ENCODE measurements at regions of chr6 and their contacts with region 1.

Region 1: GRCh38 chr6:7276199-7276524 is 36.8 kb downstream of the SSR1 start:
- DNase-seq: no peak
- CTCF ChIP-seq: no peak

Region 2: DNA sequence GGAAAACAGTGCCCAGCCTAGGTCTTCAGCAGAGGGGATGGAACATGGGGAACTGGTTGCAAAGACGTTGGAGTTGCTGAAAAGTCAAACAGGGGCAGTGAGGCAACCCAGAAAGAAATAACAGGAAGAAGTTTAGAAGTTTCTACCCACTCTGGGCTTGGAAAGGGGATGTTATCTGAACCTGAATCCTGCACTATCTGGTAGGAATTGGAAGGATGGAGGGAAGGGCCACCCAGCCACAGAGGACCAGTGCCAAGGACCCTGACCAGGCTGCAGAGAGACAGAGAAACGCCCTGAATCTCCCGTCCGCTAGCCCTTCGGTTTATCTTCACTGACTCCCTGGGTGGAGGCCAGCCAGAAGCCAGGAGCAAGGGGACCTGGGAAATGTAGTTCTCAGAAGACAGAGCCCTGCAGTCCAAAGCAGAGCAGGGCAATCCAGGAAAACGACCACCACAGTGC is 385.7 kb before region 1 on chr6:
- CTCF ChIA-PET with region 1: no interaction called
- POLR2A ChIA-PET with region 1: no interaction called
- DNase-seq: no peak
- CTCF ChIP-seq: no peak

Region 3: DNA sequence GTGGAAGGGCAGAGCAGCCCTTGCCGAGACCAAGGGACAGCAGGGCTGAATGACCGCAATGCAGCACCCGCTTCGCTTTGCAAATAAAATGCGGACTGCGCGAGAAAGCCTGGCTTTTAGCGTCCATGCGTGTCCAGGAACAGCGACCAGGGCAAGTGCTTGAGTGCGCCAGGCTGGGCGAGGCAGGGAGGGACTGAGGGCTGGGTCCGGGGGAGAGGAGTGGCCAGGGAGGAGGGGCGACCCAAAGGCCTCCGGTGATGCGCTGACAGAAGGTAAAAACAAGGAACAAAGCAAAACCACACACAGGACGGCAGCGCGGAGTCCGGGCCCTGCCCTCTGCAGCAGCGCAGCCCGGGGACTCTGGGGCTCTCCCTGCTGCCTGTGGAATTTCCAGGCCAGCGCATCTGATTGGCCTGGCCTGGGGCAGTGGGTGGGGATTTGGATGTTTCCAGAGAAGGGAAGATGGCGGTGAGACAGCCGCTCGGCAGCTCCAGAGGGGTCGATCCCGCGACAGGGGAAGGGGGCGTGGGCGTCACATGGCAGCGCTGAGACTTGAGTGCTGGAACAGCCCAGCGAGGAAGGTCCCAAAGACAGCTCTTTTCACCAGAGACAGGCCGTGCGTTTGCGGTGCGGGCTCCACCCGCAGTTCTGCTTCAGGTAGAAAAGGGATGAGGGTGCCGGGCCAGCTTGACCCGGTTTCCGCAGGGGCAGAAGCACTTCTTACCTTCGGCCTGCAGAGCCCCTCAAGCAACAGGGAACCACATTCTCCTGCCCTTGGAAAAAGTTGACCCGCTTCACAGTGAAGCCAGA is 14.9 kb before region 1 on chr6:
- CTCF ChIA-PET with region 1: interaction called, 32 read pairs
- POLR2A ChIA-PET with region 1: no interaction called
- DNase-seq: peak; percentile 84
- CTCF ChIP-seq: no peak

Region 4: GRCh38 chr6:7292596-7293255 is 16.6 kb after region 1 on chr6:
- CTCF ChIA-PET with region 1: interaction called, 73 read pairs
- POLR2A ChIA-PET with region 1: no interaction called
- DNase-seq: no peak
- CTCF ChIP-seq: no peak

Region 5: DNA sequence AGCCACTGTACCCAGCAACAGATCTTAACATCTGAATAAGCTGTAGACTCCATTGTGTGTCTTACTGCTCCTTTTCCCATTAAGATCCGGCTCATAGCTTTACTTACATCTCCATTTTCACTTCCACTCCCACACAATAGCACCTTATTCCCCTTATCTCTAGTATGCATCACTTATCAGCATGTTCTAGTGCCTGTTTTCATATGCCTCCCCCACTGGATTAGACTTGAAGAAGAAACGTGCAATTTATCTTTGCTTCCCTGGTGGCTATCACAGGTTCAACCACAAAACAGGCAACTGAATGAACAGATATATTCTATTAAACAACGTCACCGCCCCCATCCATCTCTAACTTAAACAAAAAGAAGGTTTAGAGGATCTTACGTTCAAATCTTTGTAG is 24.8 kb after region 1 on chr6:
- CTCF ChIA-PET with region 1: interaction called, 17 read pairs
- POLR2A ChIA-PET with region 1: interaction called, 3 read pairs
- DNase-seq: no peak
- CTCF ChIP-seq: no peak

Region 6: DNA sequence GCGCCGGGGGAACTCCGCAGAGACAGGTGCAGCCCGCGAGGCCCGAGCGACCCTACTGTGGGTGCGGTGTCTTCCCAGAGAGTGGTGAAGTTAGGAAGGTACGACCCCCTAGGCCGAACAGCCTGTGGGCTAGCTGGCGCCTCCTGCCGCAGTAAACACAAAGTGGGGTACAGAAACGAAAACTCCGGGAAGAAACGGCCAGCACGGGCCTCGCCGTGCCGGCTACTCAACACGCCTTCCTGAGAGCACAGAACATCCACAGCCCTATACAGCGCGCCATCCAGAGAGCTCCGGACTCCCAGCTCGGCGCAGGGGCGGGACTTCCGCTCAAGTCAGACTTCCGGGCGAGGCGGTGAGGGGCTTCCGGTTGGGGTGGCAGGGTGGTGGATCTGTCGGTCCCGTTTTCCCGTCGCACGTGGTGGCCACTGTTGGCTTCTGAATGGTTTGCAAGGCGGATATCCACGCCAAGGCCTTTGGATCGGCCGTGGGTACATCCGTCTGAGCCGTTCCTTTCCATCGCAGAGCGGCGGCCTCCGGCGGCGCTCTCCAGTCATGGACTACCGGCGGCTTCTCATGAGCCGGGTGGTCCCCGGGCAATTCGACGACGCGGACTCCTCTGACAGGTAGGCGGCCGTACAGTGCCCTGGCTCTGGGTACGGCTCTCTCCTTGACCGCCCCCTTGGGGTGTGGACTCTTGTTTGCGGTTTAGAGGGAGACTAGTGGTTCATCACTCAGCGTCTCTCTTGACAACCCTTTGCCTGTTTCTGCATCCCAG is 113.5 kb after region 1 on chr6 and contains the starts of genes CAGE1 and RIOK1:
- CTCF ChIA-PET with region 1: interaction called, 25 read pairs
- POLR2A ChIA-PET with region 1: no interaction called
- DNase-seq: peak; percentile 95
- CTCF ChIP-seq: no peak

Region 7: DNA sequence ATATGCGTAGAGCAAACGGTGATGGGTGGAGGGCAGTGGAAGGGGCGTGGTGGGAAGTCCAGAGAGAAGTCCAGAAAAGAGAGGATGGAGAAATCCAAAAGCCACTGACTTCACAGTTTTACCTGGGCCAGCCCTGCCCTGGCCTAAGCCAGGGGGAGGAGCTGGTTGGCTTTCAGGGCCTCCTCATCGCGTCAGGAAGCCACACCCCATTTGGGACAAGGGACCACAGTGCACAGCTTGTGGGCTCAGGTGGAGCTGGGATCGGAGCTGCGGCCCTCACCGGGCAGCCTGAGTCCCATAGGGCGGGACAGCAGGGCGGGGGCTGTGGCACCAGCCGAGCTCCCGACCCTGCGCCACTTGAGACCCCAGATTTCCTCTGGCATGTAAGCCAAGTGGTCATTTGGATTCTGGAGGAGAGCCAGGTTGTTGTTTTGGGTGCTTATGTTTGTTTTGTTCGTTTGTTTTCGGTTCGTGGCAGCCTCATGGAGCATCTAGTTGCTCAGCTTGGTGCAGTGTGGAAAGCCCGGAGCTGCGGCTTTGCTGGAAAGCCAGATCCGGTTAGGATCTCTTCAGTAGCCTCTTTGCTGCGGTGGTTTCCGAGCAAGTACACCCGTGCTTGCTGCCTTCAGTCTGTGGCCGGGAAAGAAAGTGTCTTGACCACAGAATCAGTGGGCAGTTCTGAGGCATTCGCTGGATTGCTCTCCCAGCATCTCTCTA is 155.7 kb after region 1 on chr6:
- CTCF ChIA-PET with region 1: no interaction called
- POLR2A ChIA-PET with region 1: no interaction called
- DNase-seq: no peak
- CTCF ChIP-seq: no peak

Region 8: GRCh38 chr6:7532230-7532629 is 256.1 kb after region 1 on chr6:
- CTCF ChIA-PET with region 1: no interaction called
- POLR2A ChIA-PET with region 1: no interaction called
- DNase-seq: no peak
- CTCF ChIP-seq: no peak

Region 9: GRCh38 chr6:7615611-7616383 is 339.6 kb after region 1 on chr6:
- CTCF ChIA-PET with region 1: interaction called, 87 read pairs
- POLR2A ChIA-PET with region 1: no interaction called
- DNase-seq: peak; percentile 56
- CTCF ChIP-seq: peak; percentile 61

Measured in GM10248 (cell line).